ENCODE measurements at regions of chr6 and their contacts with region 1.

Region 1: DNA sequence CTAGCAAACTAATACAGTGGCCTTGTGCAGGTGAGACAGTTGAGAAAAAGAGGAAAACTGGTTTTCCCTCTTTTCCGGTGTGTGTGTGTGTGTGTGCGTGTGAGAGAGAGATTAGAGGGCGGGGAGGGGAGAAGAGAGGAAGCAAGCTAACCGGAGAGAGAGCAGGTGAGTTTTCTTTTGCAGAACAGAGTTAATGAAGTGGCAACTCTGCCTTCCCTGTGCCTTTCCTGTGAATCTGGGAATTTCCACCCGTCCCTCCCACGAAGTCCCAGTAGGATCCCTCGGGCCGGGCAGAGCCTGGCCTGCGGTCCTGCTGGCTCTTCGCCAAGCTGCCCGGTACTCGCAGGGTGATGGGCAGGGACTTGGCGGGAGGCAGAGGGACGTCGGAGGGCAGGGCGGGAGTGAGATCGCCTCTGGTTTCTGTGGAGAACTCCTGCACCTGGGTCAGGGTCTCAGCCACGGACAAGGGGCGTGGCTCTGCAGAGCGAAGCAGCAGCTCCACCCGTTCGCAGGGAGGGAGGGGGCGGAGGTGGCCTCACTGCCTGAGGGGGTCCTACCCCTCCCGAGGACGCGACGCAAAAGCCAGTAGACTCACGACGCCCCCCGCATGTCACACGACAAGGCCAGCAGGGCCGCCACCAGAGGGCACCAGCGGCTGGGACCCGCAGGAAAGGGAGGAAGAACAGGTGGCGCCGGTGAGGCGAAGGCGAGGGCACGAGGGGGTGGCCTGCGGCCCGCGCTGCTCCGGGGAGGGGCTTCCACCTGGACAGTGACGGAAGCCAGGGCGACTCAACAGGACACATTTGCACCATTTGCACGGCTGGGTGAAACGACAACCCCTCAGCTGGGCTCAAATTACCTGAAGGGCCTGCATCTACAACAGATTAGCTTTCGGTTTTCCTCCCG is 51.2 kb upstream of the RNF182 start:
- DNase-seq: no peak
- H3K4me3 ChIP-seq: peak overlapping the region; percentile 52 to 63 (median 54)
- H3K27ac ChIP-seq: no peak overlapping the region
- H3K4me1 ChIP-seq: peaks cover 4 to 13% (median 13%) of the 10 kb centered on the region in 4 donors
- H3K27me3 ChIP-seq: peaks cover 0 to 4% (median 0%) of the 10 kb centered on the region in 4 donors
- CTCF ChIP-seq: peak; percentile 43 to 72 (median 50)
- EP300 ChIP-seq: no peak
- POLR2A ChIP-seq: no peak

Region 2: DNA sequence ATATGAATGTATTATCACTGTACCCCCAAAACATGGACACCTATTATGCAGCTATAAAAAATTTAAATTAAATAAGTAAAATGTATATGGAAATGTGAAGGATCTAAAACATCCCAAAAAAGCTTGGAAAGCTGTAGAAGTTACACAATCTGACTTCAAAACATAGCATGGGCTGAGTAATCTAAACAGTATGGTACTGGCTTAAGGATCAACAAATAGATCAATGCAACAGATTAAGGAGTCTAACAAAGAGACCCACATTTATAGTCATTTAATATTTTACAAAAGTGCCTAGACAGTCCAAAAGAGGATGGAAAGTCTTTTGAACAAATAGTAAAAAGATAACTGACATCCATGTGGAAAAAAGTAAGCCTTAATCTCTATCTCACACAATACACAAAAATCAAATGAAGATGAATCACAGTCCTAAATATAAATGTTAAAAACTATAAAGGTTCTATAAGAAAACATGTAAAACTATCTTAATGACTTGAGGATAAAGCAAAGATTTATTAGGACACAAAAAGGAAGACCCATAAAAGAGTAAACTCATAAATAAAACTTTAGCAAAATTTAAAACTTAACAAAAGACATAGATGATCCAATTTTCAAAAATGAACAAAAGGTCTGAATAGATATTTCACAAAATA is 208.7 kb before region 1 on chr6:
- intact Hi-C with region 1: no loop called
- DNase-seq: no peak
- H3K4me3 ChIP-seq: no peak overlapping the region
- H3K27ac ChIP-seq: no peak overlapping the region
- H3K4me1 ChIP-seq: peaks cover 5 to 45% (median 30%) of the 10 kb centered on the region in 4 donors
- H3K27me3 ChIP-seq: no peaks in the 10 kb centered on the region
- CTCF ChIP-seq: no peak
- EP300 ChIP-seq: no peak
- POLR2A ChIP-seq: no peak

Region 3: GRCh38 chr6:13814176-13814937 is 59.2 kb before region 1 on chr6 and contains the start of gene MCUR1:
- intact Hi-C with region 1: loop called (anchors 5 kb)
- DNase-seq: peak; percentile 93
- H3K4me3 ChIP-seq: peak within 1 kb of the TSS; percentile 79 to 96 (median 86)
- H3K27ac ChIP-seq: peak within 1 kb of the TSS; percentile 90 to 97 (median 95)
- H3K4me1 ChIP-seq: peaks cover 35 to 42% (median 39%) of the 10 kb centered on the region in 4 donors
- H3K27me3 ChIP-seq: no peaks in the 10 kb centered on the region
- CTCF ChIP-seq: peak; percentile 4 to 33 (median 27)
- EP300 ChIP-seq: no peak
- POLR2A ChIP-seq: peak; percentile 37
- total RNA-seq, gene MCUR1: 7.8 to 19.1 (median 17.9) TPM

Measured in esophagus muscularis mucosa (tissue), 4 donors.